Calu3 (cell line): ENCODE measurements at regions of chr1 and their contacts with region 1.

Region 1: DNA sequence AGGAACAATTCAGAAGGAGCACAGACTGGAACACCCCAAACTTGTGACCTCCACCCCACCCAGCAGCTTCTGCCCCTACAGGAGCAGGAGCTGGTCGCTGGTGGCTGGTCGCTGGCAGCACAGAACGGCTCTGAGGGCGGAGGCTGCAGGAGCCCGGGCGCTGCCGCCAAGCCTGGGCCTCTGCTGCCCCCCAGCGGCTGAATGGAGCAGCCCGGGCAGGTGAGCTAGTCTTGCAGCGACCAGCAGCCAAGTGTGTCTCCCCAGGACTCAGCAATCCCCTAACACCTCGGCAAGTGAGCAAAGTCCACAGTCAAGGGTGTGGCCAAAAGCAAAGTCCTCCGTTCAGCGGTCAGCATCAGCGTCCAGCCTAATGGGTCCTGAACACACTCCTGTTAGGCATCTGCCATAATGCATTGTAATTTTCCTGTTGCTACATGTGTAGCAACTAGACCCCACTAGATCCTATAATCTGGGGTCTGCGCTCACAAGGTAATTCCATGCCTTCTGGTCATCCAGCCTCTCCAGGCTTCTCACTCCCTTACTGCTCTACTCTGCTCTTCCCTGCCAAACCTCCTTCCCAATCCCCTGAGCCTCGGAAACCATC is 12.1 kb upstream of the GJB5 start:
- DNase-seq: peak; percentile 95
- H3K4me3 Mint-ChIP-seq: no peak overlapping the region
- H3K27ac Mint-ChIP-seq: no peak overlapping the region
- H3K4me1 Mint-ChIP-seq: peaks cover 15% of the 10 kb centered on the region
- H3K27me3 Mint-ChIP-seq: no peaks in the 10 kb centered on the region
- CTCF ChIP-seq: peak; percentile 94

Region 2: DNA sequence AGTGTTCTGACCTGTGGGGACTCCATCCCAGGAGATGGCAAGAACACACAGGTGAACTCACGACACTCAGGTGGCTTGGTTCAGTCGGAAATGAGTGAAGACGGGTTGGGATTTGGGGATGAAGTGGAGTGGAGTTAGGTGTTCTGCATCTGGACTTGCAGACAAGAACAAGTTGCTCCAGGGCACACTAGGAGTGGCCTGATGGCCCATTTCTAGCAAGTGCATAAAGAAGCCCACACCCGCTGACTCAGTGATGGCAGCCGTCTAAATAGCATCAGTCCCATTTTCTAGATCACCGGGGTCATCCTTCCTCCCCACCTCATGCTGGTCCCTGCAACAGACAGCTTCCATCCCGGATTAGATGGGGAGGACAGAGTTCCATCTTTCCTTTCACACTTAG is 287.6 kb before region 1 on chr1:
- CTCF ChIA-PET with region 1: interaction called, 5 read pairs
- intact Hi-C with region 1: loop called (anchors 5 kb)
- DNase-seq: no peak
- H3K4me3 Mint-ChIP-seq: no peak overlapping the region
- H3K27ac Mint-ChIP-seq: no peak overlapping the region
- H3K4me1 Mint-ChIP-seq: no peaks in the 10 kb centered on the region
- H3K27me3 Mint-ChIP-seq: peaks cover 13% of the 10 kb centered on the region
- CTCF ChIP-seq: no peak

Region 3: GRCh38 chr1:34597877-34598514 is 144.8 kb before region 1 on chr1:
- CTCF ChIA-PET with region 1: interaction called, 3 read pairs
- intact Hi-C with region 1: loop called (anchors 5 kb)
- DNase-seq: peak; percentile 92
- H3K4me3 Mint-ChIP-seq: no peak overlapping the region
- H3K27ac Mint-ChIP-seq: no peak overlapping the region
- H3K4me1 Mint-ChIP-seq: no peaks in the 10 kb centered on the region
- H3K27me3 Mint-ChIP-seq: peaks cover 72% of the 10 kb centered on the region
- CTCF ChIP-seq: peak; percentile 89

Region 4: DNA sequence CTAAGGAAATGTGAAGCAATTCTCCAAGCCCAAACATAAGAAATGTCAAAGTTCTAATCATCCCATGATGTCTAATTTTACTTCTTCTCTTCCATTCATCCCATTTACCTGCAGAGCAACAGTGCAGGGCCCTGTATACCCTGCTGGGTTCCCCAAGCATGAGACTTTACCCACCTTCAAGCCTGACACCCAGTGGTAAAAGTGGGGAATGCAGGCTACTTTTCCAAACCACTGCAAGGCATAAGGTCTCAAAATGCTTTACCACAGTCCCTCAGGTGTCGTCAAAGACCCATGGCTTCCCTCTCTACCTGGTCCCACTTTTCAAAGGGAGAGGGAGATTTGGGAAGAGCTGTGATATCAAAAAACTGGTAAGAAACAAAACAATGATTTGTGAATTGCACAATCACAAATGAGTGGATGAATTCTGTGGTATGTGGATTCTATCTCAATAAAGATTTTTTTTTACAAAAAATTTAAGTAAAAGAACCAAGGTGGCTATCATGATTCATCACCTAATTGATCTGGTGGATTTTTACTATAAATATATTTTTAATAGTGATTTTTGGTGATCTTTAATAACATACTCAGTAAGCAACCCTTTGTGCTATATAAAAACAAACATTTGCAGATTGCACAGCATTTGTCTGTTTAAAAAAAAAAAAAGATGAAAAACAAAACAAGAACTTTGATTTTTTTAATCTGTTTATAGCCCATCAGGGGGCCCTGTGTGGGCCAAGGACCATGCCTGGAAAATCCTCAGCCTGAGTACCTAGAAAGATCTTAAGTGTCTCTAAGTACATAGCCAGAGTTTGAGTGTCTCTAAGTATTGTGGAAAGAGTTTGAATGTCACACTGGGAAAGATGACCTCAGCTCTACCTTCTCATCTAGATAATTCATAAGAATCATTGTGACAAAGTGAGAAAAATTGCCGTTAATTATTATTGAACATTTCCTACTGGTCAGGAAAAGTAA is 61.0 kb before region 1 on chr1:
- CTCF ChIA-PET with region 1: no interaction called
- intact Hi-C with region 1: loop called (anchors 5 kb)
- DNase-seq: peak; percentile 80
- H3K4me3 Mint-ChIP-seq: no peak overlapping the region
- H3K27ac Mint-ChIP-seq: no peak overlapping the region
- H3K4me1 Mint-ChIP-seq: peaks cover 13% of the 10 kb centered on the region
- H3K27me3 Mint-ChIP-seq: peaks cover 22% of the 10 kb centered on the region
- CTCF ChIP-seq: peak; percentile 77

Region 5: DNA sequence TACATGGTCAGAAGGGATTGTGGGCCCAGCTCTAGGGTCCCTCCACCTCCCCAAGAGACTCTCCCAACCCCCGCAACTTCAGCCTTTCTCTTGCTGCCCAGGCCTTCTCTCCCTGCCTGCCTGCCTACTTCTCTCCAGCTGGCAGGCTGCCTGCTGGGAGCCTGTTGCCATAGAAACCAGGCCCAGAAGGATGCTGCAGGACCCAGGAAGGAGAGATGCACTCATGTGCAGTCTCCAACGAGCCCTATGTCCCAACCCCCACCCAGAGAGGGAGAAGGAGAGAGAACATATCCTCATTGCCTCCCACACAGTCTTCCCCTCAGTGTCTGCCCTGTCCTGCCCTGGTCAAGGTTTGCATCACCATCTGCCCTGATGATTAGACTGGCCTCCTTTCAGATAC is 127.6 kb after region 1 on chr1:
- CTCF ChIA-PET with region 1: no interaction called
- intact Hi-C with region 1: no loop called
- DNase-seq: no peak
- H3K4me3 Mint-ChIP-seq: no peak overlapping the region
- H3K27ac Mint-ChIP-seq: no peak overlapping the region
- H3K4me1 Mint-ChIP-seq: no peaks in the 10 kb centered on the region
- H3K27me3 Mint-ChIP-seq: peaks cover 66% of the 10 kb centered on the region
- CTCF ChIP-seq: no peak